Endothelial cell of umbilical vein (primary cell): ENCODE measurements at regions of chr17 and their contacts with region 1.

Region 1: GRCh38 chr17:39244600-39245570 is 19.1 kb upstream of the STAC2 start:
- DNase-seq: peak; percentile 82
- H3K4me3 ChIP-seq: no peak overlapping the region
- H3K27ac ChIP-seq: no peak overlapping the region
- H3K4me1 ChIP-seq: no peaks in the 10 kb centered on the region
- H3K27me3 ChIP-seq: no peaks in the 10 kb centered on the region
- CTCF ChIP-seq: peak; percentile 84 to 92
- POLR2A ChIP-seq: no peak

Region 2: DNA sequence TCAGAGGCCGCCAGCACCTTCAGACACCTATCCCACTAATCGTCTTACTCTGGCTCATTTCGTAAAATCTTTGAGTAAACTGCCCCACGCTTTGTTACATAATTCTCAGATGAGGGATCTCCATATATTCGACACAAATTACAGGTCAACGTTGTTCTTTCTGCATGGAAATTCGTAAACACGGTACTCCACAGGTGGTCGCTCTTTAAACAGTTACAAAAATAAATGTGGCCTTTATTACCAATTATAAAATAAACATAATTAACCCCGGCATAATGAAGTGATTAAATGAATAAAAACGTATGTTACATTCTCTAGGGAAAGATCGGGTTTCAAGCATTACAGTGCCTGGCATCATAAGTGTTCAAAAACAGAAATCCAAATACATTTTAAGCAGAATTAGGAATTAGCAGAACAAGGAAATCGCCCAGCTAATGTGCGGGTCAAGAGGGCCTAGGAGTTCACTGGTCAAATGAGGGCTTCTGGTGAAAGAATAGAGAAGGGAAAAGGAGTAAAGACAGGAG is 444.6 kb before region 1 on chr17:
- CTCF ChIA-PET with region 1: no interaction called
- POLR2A ChIA-PET with region 1: no interaction called
- dilution Hi-C with region 1: no loop called
- intact Hi-C with region 1: no loop called
- DNase-seq: no peak
- H3K4me3 ChIP-seq: peak overlapping the region; percentile 28 to 94 (median 64)
- H3K27ac ChIP-seq: no peak overlapping the region
- H3K4me1 ChIP-seq: peaks cover 17% of the 10 kb centered on the region
- H3K27me3 ChIP-seq: no peaks in the 10 kb centered on the region
- CTCF ChIP-seq: no peak
- POLR2A ChIP-seq: no peak

Region 3: DNA sequence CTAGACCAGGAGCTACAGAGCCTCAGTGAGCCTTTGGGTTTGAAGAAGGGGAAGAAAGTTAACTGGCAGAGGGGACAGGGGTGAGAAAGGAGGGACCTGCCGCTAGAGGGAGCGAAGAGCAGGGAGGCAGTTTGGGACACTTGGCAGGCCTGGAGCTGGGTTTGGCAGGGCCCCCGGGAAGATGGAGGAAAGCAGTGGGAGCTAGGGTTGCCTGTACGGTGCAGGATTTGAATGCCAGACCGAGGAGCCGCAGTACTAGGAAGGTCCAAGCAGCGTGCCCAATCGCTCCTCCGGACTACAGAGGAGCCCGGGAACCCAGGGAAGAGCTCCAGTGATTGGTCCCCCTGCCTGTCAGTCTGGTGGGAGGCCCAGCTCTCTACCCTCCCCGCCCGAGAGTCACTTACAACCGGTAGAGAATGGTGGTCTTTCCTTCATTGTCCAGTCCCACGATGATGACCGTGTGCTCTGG is 80.2 kb before region 1 on chr17:
- CTCF ChIA-PET with region 1: interaction called, 34 read pairs
- POLR2A ChIA-PET with region 1: no interaction called
- dilution Hi-C with region 1: no loop called
- intact Hi-C with region 1: no loop called
- DNase-seq: peak; percentile 86
- H3K4me3 ChIP-seq: peak overlapping the region; percentile 2 to 54 (median 36)
- H3K27ac ChIP-seq: no peak overlapping the region
- H3K4me1 ChIP-seq: peaks cover 5% of the 10 kb centered on the region
- H3K27me3 ChIP-seq: peaks cover 27 to 31% of the 10 kb centered on the region in 2 experiments
- CTCF ChIP-seq: peak; percentile 70 to 89
- POLR2A ChIP-seq: no peak

Region 4: DNA sequence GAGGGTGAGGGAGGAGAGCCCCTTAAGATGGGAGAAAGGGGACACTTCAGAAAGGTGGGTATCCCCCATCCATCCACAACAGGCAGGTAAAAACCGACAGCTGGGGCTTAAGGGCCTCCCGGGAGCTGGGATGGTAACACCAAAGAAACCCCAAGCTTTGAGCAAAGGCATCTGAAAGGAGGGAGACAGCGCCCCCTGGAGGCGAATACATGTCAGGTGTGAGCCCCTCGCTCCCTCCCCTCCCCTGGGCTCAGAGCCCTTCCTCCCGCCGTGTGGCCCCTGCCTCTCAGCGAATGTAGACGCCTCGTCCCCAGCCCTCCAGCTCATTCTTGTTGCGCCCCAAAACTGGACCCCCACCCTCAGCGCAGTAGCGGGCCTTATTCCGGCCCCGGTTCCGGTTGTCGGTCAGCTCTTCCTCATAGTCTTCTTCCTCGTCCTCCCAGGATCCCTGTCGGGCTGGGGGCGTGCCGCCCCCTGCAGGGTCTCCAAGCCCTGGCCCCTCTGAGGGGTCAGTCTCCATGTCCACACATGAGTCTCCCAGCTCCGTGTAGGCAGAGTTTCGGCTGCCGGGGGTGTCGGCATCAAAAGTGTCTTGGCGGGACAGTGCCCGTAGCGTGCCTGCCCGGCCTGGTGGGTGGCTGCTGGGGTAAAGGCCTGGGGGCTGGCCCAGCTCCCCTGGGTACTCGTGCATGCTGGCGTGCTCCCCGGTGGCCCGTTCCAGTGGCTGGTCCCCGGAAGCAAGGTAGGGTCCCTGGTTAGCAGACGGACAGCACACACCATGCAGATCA is 69.8 kb before region 1 on chr17:
- CTCF ChIA-PET with region 1: interaction called, 14 read pairs
- POLR2A ChIA-PET with region 1: interaction called, 5 read pairs
- dilution Hi-C with region 1: no loop called
- intact Hi-C with region 1: no loop called
- DNase-seq: peak; percentile 44
- H3K4me3 ChIP-seq: no peak overlapping the region
- H3K27ac ChIP-seq: no peak overlapping the region
- H3K4me1 ChIP-seq: peaks cover 12% of the 10 kb centered on the region
- H3K27me3 ChIP-seq: no peaks in the 10 kb centered on the region
- CTCF ChIP-seq: peak; percentile 67 to 91
- POLR2A ChIP-seq: no peak

Region 5: GRCh38 chr17:39194089-39194984 is 50.5 kb before region 1 on chr17:
- CTCF ChIA-PET with region 1: interaction called, 12 read pairs
- POLR2A ChIA-PET with region 1: interaction called, 3 read pairs
- dilution Hi-C with region 1: no loop called
- intact Hi-C with region 1: no loop called
- DNase-seq: no peak
- H3K4me3 ChIP-seq: no peak overlapping the region
- H3K27ac ChIP-seq: no peak overlapping the region
- H3K4me1 ChIP-seq: peaks cover 3% of the 10 kb centered on the region
- H3K27me3 ChIP-seq: no peaks in the 10 kb centered on the region
- CTCF ChIP-seq: peak in 1 of 2 donors; percentile 32
- POLR2A ChIP-seq: no peak

Region 6: DNA sequence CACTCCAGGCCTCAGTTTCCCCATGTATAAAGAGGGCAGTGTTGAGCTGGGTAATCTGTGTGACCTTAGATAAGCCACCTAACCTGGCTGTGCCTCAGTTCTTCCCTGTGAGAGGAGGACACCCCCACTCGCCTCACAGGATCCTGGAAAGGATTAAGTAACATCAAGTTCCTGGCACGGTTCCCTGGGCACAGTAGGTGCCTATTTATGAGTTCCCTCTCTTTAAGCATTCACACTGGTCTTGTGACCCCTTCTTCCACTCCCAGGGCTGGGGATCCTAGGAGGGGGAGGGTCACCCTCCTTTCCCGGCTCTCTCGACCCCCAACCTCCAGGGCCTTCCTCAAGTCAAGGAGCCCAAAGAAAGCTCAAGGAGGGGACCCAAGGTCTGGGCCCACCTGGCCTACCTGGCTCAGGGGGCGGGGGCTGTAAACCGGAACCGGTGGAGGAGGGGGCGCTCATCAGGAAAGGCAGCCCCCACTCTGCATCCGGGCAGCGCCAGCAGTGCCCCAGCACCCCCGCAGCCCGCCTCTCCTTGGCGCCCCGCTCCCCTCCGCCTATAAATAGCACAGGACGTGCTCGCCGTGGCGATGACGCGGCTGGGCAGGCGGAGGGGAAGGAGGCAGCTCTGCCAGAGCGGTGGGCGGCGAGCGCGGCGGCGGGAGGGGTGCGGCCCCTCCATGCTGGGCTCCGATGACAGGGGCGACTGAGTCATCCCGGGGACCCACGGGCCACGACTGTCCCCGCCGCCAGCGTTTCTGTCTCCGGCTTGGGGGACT is 35.4 kb before region 1 on chr17:
- CTCF ChIA-PET with region 1: interaction called, 420 read pairs
- POLR2A ChIA-PET with region 1: interaction called, 8 read pairs
- dilution Hi-C with region 1: no loop called
- intact Hi-C with region 1: loop called (anchors 1 kb)
- DNase-seq: peak; percentile 29
- H3K4me3 ChIP-seq: peak overlapping the region in 2 of 3 experiments; percentile 7 to 27
- H3K27ac ChIP-seq: no peak overlapping the region
- H3K4me1 ChIP-seq: peaks cover 5% of the 10 kb centered on the region
- H3K27me3 ChIP-seq: peaks cover 0 to 2% of the 10 kb centered on the region in 2 experiments
- CTCF ChIP-seq: no peak
- POLR2A ChIP-seq: no peak

Region 7: DNA sequence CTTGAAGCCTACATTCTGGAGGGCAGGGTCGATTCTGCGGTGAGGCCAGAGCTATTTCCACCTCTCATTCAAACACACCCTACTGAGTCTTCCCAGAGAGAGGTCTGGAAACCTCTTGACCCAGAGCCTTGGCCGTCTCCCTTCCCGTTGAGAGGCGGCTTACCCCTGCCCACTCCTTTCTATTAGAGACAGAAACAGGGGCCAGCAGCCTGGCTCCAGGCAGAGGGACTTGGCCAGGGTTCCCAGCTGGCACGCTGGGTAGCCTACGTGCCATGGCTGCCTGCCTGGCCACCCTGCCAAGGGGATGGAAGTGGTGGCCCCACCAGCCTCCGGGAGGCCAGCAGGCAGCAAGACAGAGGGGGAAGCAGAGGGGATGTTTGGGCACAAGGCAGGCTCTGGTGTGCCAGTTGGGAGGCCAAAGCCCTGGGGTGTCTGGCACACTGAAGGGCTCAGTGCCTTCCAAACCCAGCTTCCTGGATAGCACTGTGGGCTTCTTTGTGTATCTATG is 25.2 kb before region 1 on chr17:
- CTCF ChIA-PET with region 1: interaction called, 18 read pairs
- POLR2A ChIA-PET with region 1: no interaction called
- dilution Hi-C with region 1: no loop called
- intact Hi-C with region 1: no loop called
- DNase-seq: no peak
- H3K4me3 ChIP-seq: no peak overlapping the region
- H3K27ac ChIP-seq: no peak overlapping the region
- H3K4me1 ChIP-seq: peaks cover under 1% of the 10 kb centered on the region
- H3K27me3 ChIP-seq: peaks cover 28 to 30% of the 10 kb centered on the region in 2 experiments
- CTCF ChIP-seq: no peak
- POLR2A ChIP-seq: no peak

Region 8: GRCh38 chr17:39225959-39226683 is 18.8 kb before region 1 on chr17:
- CTCF ChIA-PET with region 1: interaction called, 54 read pairs
- POLR2A ChIA-PET with region 1: no interaction called
- dilution Hi-C with region 1: no loop called
- intact Hi-C with region 1: no loop called
- DNase-seq: peak; percentile 36
- H3K4me3 ChIP-seq: peak overlapping the region in 2 of 3 experiments; percentile 9 to 26
- H3K27ac ChIP-seq: no peak overlapping the region
- H3K4me1 ChIP-seq: peaks cover 14% of the 10 kb centered on the region
- H3K27me3 ChIP-seq: peaks cover 28 to 31% of the 10 kb centered on the region in 2 experiments
- CTCF ChIP-seq: no peak
- POLR2A ChIP-seq: no peak

Region 9: GRCh38 chr17:39325528-39326240 is 80.8 kb after region 1 on chr17:
- CTCF ChIA-PET with region 1: no interaction called
- POLR2A ChIA-PET with region 1: no interaction called
- dilution Hi-C with region 1: no loop called
- intact Hi-C with region 1: no loop called
- DNase-seq: no peak
- H3K4me3 ChIP-seq: no peak overlapping the region
- H3K27ac ChIP-seq: no peak overlapping the region
- H3K4me1 ChIP-seq: peaks cover 5% of the 10 kb centered on the region
- H3K27me3 ChIP-seq: no peaks in the 10 kb centered on the region
- CTCF ChIP-seq: no peak
- POLR2A ChIP-seq: no peak

Region 10: GRCh38 chr17:39410279-39410678 is 165.4 kb after region 1 on chr17:
- CTCF ChIA-PET with region 1: no interaction called
- POLR2A ChIA-PET with region 1: no interaction called
- dilution Hi-C with region 1: no loop called
- intact Hi-C with region 1: no loop called
- DNase-seq: no peak
- H3K4me3 ChIP-seq: no peak overlapping the region
- H3K27ac ChIP-seq: no peak overlapping the region
- H3K4me1 ChIP-seq: no peaks in the 10 kb centered on the region
- H3K27me3 ChIP-seq: no peaks in the 10 kb centered on the region
- CTCF ChIP-seq: no peak
- POLR2A ChIP-seq: no peak